ENCODE measurements at regions of chr13 and their contacts with region 1.

Region 1: GRCh38 chr13:113208424-113209335 is at the start of gene PCID2:
- DNase-seq: peak; percentile 91
- H3K4me3 Mint-ChIP-seq: peak within 1 kb of the TSS; percentile 92
- H3K27ac Mint-ChIP-seq: peak within 1 kb of the TSS; percentile 81
- H3K4me1 Mint-ChIP-seq: peaks cover 65% of the 10 kb centered on the region
- H3K27me3 Mint-ChIP-seq: no peaks in the 10 kb centered on the region
- total RNA-seq, gene PCID2: 58.9 to 66.2 TPM

Region 2: GRCh38 chr13:113153810-113154748 is 54.6 kb before region 1 on chr13:
- CTCF ChIA-PET with region 1: no interaction called
- POLR2A ChIA-PET with region 1: interaction called, 25 read pairs
- DNase-seq: peak; percentile 65
- H3K4me3 Mint-ChIP-seq: peak overlapping the region; percentile 61
- H3K27ac Mint-ChIP-seq: no peak overlapping the region
- H3K4me1 Mint-ChIP-seq: peaks cover 24% of the 10 kb centered on the region
- H3K27me3 Mint-ChIP-seq: peaks cover 26% of the 10 kb centered on the region

Region 3: DNA sequence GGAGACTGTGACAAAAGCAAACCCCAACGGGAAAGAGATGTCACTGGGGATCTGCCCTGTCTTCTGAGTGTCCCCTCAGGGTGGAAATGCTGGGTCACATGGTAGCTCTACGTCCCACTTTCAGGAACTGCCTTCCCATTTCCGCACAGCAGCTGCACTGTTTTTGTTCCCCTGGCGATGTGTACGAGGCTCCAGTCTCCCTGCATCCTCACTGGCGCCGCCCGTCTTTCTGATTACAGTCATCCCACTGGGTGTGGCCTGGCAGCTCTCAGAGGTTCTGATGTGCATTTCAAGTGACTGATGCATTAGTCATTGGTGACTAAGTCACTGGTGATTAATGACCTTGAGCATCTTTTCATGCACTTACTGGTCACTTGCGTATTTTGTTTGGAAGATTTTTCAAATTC is 21.4 kb before region 1 on chr13:
- CTCF ChIA-PET with region 1: interaction called, 3 read pairs
- POLR2A ChIA-PET with region 1: interaction called, 77 read pairs
- DNase-seq: peak; percentile 70
- H3K4me3 Mint-ChIP-seq: peak overlapping the region; percentile 68
- H3K27ac Mint-ChIP-seq: peak overlapping the region; percentile 81
- H3K4me1 Mint-ChIP-seq: peaks cover 59% of the 10 kb centered on the region
- H3K27me3 Mint-ChIP-seq: no peaks in the 10 kb centered on the region

Region 4: DNA sequence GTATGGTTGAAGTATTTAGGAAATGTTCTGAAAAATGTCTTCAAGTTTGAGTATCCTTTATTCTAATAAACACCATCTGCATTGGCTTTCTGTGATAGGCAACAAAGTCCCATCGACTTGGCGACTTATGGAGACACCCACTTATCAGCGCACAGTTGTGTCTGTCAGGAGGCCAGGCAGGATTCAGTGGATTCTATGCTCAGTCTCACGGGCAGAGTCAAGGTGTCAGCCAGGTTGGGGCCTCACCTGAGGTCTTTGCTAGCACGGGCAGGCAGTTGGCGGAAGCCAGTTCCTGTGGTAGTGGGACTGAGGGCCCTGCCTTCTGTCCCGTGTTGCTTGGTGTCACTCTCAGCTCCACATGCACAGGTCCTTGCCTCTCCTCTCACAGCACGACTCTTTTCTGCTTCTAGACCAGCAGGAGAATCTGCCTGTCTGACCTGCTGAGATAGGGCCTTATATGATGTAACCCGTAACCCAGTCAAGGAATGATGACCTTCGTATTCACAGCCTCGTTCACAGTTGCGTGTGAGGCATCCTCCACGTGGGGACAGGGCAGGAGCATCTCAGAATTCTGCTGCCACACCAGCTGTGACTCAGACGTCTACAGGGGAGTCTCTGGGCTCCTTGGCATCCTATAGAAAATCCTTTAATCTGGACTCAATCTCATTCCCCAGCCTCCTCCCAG is 10.7 kb after region 1 on chr13:
- CTCF ChIA-PET with region 1: interaction called, 3 read pairs
- POLR2A ChIA-PET with region 1: interaction called, 11 read pairs
- DNase-seq: no peak
- H3K4me3 Mint-ChIP-seq: no peak overlapping the region
- H3K27ac Mint-ChIP-seq: no peak overlapping the region
- H3K4me1 Mint-ChIP-seq: peaks cover 21% of the 10 kb centered on the region
- H3K27me3 Mint-ChIP-seq: no peaks in the 10 kb centered on the region

Region 5: GRCh38 chr13:113490496-113491417 is 282.1 kb after region 1 on chr13 and contains the start of gene DCUN1D2:
- CTCF ChIA-PET with region 1: no interaction called
- POLR2A ChIA-PET with region 1: interaction called, 13 read pairs
- DNase-seq: peak; percentile 81
- H3K4me3 Mint-ChIP-seq: peak within 1 kb of the TSS; percentile 93
- H3K27ac Mint-ChIP-seq: peak within 1 kb of the TSS; percentile 79
- H3K4me1 Mint-ChIP-seq: peaks cover 63% of the 10 kb centered on the region
- H3K27me3 Mint-ChIP-seq: no peaks in the 10 kb centered on the region
- total RNA-seq, gene DCUN1D2: 17.0 to 17.7 TPM